Mammary epithelial cell (primary cell): ENCODE measurements at regions of chr11 and their contacts with region 1.

Region 1: DNA sequence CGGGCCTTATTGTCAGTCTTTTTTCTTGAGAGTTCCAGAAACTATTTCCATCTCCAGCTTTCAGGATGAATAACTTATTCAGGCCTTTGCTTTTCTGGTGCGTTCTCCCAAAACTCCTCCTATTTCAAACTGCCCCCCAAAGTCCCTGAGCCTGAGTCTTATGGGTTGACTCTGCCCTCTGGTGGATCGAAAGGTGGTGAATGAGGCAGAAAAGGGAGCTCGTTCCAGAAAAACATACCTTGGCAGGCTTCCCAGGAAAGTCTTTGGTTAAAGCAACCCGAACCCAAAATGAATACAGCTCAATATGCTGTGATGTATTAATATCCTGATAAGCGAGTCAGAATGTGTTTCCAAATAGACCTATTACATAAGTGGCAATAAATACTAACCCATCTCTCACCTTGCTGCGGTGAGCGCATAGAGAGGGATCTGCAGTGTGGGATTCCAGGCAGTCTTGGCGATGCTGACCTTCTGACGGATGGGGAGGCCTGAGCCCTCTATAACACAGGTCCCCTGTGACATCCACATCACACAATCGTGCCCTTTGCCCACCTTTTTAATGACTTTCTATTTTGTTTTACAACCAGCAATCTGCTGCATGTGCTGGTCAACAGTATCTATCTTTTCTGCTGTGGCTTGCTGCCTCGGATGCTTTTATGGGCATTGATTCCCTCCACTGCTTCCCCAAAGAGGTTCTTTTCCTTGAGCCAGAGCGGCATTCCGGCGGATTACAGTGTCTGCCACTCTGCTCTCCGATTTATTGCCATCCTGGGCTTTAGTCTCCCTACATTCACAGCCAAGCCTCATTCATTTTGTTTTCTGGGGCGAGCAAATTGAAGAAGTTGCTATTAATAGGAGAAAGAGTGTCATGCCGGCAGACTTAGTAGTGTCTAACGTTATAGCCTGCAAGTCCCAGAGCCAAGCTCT is 756.8 kb downstream of the NTM start:
- DNase-seq: peak; percentile 67
- H3K4me3 ChIP-seq: peak overlapping the region in 2 of 3 experiments; percentile 34 to 36
- H3K27ac ChIP-seq: peak overlapping the region; percentile 48
- H3K4me1 ChIP-seq: peaks cover 29% of the 10 kb centered on the region
- H3K27me3 ChIP-seq: no peaks in the 10 kb centered on the region
- CTCF ChIP-seq: peak; percentile 62 to 79

Region 2: DNA sequence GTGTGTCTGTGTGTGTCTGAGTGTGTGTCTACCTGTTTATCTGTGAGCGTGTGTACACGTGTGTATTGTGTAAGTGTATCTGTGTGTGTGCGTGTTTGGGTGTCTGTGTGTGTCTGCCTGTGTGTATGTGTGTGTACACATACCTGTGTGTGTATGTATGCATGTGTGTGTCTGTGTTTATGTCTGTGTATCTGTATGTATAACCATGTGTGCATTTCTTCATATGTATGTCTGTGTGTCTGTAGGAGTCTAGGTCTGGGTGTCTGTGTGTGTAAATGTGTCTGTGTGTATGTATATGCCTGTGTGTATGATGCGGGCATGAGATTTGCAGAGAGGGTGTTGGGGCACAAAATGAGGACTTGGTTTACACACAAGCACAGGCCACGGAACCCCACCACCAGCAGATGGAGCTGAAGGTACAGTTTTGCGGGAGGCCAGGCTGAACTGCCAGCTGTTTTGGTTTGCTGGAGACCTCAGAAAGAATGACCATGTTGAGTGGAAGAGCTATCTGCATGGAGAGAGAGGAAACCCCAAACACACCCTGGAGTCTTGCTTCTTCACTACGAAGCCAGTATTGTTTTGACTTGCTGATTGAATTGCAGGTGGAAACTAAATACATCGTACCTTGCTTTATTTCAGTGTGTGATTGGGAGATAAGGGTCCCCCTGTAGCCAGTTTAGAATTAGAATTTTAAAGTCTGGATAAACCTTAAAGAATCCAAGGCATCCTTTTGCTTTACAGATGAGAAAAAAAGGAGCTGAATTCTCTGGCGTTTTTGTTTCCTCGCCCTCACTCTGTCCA is 259.6 kb before region 1 on chr11:
- CTCF ChIA-PET with region 1: interaction called, 14 read pairs
- dilution Hi-C with region 1: no loop called
- in situ Hi-C with region 1: no loop called
- intact Hi-C with region 1: loop called (anchors 1 kb)
- DNase-seq: peak; percentile 70
- H3K4me3 ChIP-seq: no peak overlapping the region
- H3K27ac ChIP-seq: no peak overlapping the region
- H3K4me1 ChIP-seq: peaks cover 6% of the 10 kb centered on the region
- H3K27me3 ChIP-seq: no peaks in the 10 kb centered on the region
- CTCF ChIP-seq: peak; percentile 95 to 98

Region 3: DNA sequence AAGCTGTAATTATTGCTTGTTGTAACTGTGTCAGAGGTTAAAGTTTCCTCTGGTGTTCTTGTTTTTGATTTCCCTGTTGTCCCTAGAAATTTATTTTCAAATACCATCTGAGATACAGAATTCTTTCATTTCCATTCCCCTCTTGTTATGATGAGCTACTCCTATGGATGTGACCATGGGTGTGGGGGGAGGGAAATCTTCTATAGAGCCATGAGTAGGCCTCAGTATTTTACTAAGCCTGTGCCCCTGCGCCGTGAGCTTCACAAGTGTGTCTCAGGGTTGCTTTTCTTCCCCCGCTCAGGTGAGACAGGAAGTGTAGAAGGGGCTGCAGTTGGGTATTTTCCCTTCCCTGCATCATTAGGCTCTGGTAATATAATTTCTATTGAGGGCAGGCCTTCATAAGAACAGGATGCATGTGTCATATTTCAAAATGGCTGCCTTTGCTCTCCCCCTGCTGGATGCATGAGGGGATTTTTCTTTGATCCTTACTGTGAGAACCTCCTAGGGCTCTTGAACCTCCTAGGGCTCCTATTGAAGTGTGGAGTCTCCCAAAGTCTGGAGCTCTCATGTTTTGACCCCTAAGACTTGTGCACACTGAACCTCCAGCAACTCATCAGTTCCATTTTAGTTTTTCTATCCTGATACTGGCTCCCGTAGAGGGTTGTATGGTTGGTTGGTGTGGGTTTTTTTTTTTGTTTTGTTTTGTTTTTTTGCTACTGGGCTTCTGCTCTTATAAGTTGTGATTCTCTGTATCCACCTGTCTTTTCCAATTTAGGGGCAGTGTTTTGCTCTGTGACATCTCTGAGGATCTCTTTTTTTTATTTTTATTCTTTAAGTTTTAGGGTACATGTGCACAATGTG is 98.6 kb before region 1 on chr11:
- CTCF ChIA-PET with region 1: no interaction called
- dilution Hi-C with region 1: no loop called
- in situ Hi-C with region 1: no loop called
- intact Hi-C with region 1: loop called (anchors 1 kb)
- DNase-seq: no peak
- H3K4me3 ChIP-seq: no peak overlapping the region
- H3K27ac ChIP-seq: no peak overlapping the region
- H3K4me1 ChIP-seq: peaks cover 35% of the 10 kb centered on the region
- H3K27me3 ChIP-seq: no peaks in the 10 kb centered on the region
- CTCF ChIP-seq: peak; percentile 62 to 64

Region 4: DNA sequence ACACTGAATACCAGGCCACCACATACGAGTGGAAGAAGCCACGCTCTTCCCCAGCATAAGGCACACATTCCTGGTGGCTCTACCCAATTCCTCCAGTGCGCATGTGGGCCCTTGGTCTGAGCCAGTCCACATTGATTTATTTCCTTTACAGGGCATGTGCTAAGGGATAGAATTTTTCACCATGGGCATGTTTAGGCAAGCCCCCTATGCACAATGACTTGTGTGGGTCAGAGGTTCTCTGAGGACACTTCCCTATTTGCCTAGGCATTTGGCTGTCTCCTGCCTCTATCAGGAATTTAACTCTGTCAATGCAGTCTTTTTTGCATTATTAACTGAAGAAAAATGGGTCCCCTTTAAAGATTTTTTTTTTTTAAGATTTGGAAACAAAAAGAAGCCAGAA is 38.7 kb before region 1 on chr11:
- CTCF ChIA-PET with region 1: no interaction called
- dilution Hi-C with region 1: loop called (anchors 5 kb)
- in situ Hi-C with region 1: no loop called
- intact Hi-C with region 1: no loop called
- DNase-seq: peak; percentile 49
- H3K4me3 ChIP-seq: no peak overlapping the region
- H3K27ac ChIP-seq: no peak overlapping the region
- H3K4me1 ChIP-seq: peaks cover 13% of the 10 kb centered on the region
- H3K27me3 ChIP-seq: no peaks in the 10 kb centered on the region
- CTCF ChIP-seq: no peak

Region 5: GRCh38 chr11:132373405-132374143 is 246.3 kb after region 1 on chr11:
- CTCF ChIA-PET with region 1: no interaction called
- dilution Hi-C with region 1: no loop called
- in situ Hi-C with region 1: no loop called
- intact Hi-C with region 1: no loop called
- DNase-seq: no peak
- H3K4me3 ChIP-seq: no peak overlapping the region
- H3K27ac ChIP-seq: no peak overlapping the region
- H3K4me1 ChIP-seq: no peaks in the 10 kb centered on the region
- H3K27me3 ChIP-seq: no peaks in the 10 kb centered on the region
- CTCF ChIP-seq: no peak

Region 6: GRCh38 chr11:132402071-132402684 is 274.9 kb after region 1 on chr11:
- CTCF ChIA-PET with region 1: interaction called, 3 read pairs
- dilution Hi-C with region 1: no loop called
- in situ Hi-C with region 1: no loop called
- intact Hi-C with region 1: loop called (anchors 2 kb)
- DNase-seq: peak; percentile 39
- H3K4me3 ChIP-seq: no peak overlapping the region
- H3K27ac ChIP-seq: no peak overlapping the region
- H3K4me1 ChIP-seq: no peaks in the 10 kb centered on the region
- H3K27me3 ChIP-seq: no peaks in the 10 kb centered on the region
- CTCF ChIP-seq: peak; percentile 62 to 71